ENCODE measurements at regions of chr6 and their contacts with region 1.

Region 1: GRCh38 chr6:45495429-45496084 is 117.8 kb upstream of the SUPT3H start:
- DNase-seq: no peak
- H3K4me3 Mint-ChIP-seq: peak overlapping the region; percentile 38
- H3K27ac Mint-ChIP-seq: peak overlapping the region; percentile 85
- H3K4me1 Mint-ChIP-seq: peaks cover 71% of the 10 kb centered on the region
- H3K27me3 Mint-ChIP-seq: no peaks in the 10 kb centered on the region

Region 2: DNA sequence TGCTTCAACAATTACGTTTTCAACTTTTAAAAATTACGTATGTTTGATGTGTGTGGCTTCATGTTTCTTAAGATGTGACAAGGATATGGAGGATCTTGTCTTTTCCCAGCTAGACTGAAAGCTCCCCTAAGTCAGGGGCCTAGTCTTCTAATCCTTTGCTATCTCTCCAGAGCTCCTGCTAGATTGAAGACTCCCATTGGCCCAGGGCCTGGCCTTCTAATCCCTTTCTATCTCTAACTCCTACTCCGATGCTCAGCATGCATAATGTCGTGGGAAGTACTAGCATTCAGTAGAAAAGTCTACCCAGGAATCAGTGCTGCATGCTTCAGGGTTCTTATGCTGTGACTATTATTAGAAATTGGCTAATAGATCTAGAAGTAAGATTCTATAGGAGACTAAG is 26.9 kb after region 1 on chr6:
- intact Hi-C with region 1: no loop called
- DNase-seq: no peak
- H3K4me3 Mint-ChIP-seq: no peak overlapping the region
- H3K27ac Mint-ChIP-seq: peak overlapping the region; percentile 44
- H3K4me1 Mint-ChIP-seq: peaks cover 39% of the 10 kb centered on the region
- H3K27me3 Mint-ChIP-seq: no peaks in the 10 kb centered on the region

Region 3: GRCh38 chr6:45548657-45549515 is 53.3 kb after region 1 on chr6:
- intact Hi-C with region 1: loop called (anchors 2 kb)
- DNase-seq: no peak
- H3K4me3 Mint-ChIP-seq: no peak overlapping the region
- H3K27ac Mint-ChIP-seq: peak overlapping the region; percentile 12
- H3K4me1 Mint-ChIP-seq: peaks cover 48% of the 10 kb centered on the region
- H3K27me3 Mint-ChIP-seq: no peaks in the 10 kb centered on the region

Region 4: DNA sequence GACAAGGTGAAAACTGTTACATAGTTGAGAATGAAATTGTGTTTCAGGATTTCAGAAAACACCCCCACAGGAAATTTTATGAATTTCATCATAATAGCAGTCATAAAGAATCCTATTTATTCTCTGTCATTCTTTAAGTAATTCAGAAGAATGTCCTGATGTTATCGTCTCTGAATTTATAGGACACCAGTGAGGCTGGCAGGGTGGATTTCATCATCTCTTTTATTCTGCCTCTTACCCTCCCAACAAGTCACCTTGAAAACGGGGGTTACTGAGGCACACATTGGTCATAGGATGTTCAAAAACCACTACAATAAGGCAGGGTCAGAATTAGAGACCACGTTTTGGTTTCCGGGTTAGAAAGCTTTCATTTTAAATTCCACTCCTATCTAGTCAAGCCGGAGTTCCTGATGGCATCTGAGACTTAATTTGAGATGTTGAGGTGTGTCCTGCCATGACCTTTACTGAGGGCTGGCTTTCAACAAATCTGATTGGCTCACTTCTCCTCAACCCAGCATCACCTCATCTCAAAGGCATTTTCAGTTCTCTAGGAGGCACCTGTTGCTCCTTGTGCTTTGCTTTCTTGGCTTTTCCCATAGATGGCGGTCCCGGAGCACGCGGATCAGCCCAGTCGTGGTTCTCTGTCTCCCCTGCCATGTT is 112.8 kb after region 1 on chr6:
- intact Hi-C with region 1: loop called (anchors 5 kb)
- DNase-seq: no peak
- H3K4me3 Mint-ChIP-seq: no peak overlapping the region
- H3K27ac Mint-ChIP-seq: peak overlapping the region; percentile 78
- H3K4me1 Mint-ChIP-seq: peaks cover 48% of the 10 kb centered on the region
- H3K27me3 Mint-ChIP-seq: no peaks in the 10 kb centered on the region

Region 5: DNA sequence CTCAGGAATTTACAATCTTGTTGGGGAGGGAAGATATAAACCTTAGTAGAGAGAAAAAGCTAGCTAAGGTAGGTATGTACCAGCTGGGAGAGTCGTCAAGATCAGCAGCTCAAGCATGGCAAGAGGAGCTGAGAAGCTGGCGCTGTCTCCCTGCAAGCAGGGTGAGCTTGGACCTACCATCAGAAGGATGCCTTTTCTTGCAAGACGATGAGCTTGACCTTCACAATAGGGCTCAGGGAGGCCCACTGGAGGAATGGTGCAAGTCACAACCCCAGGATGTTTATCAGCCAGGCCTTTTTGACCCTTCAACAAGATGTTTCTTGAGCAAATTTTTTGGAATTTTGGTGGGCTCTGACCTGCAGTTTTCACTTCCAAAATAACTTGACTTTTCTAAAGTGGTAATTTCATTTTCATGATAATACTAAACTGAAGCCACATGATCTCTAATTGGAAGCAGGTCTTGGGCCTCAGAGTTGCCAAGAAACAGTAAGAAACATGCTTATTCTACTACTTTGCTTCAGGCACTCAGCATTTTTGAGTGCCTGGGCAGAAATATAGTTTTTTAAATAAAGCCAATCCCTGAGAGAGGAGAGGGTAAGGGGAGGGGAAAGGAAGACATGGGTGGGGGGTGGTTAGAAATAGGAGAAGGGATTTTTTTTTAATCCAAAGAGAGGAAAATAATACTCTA is 262.0 kb after region 1 on chr6:
- intact Hi-C with region 1: no loop called
- DNase-seq: no peak
- H3K4me3 Mint-ChIP-seq: no peak overlapping the region
- H3K27ac Mint-ChIP-seq: peak overlapping the region; percentile 30
- H3K4me1 Mint-ChIP-seq: peaks cover 30% of the 10 kb centered on the region
- H3K27me3 Mint-ChIP-seq: no peaks in the 10 kb centered on the region

Measured in activated T-helper 2 cell treated with anti-CD3 and anti-CD28 coated beads, Interferon-gamma antibody, Interleukin-2, Interleukin-4, amounts not matched to agents 10 μg/mL and 5 μg/mL and 100 μg/mL, durations not matched to agents 14 hours and 24 hours and 36 hours (primary cell).